Naive thymus-derived CD4-positive, alpha-beta T cell (primary cell): ENCODE measurements at regions of chr15 and their contacts with region 1.

Region 1: GRCh38 chr15:50686468-50687301 is at the start of gene TRPM7:
- DNase-seq: peak; percentile 83 to 93 (median 90)
- ATAC-seq: peak; percentile 91
- H3K4me3 ChIP-seq: peak within 1 kb of the TSS; percentile 99
- H3K4me3 Mint-ChIP-seq: peak within 1 kb of the TSS; percentile 86 to 100 (median 97)
- H3K27ac ChIP-seq: peak within 1 kb of the TSS; percentile 93
- H3K27ac Mint-ChIP-seq: peak within 1 kb of the TSS; percentile 91 to 99 (median 97)
- H3K4me1 ChIP-seq: peaks cover 16 to 26% of the 10 kb centered on the region in 2 donors
- H3K4me1 Mint-ChIP-seq: peaks cover 42 to 62% (median 51%) of the 10 kb centered on the region in 7 donors
- H3K27me3 ChIP-seq: no peaks in the 10 kb centered on the region
- H3K27me3 Mint-ChIP-seq: no peaks in the 10 kb centered on the region
- total RNA-seq, gene TRPM7: 36.1 to 62.3 (median 45.2) TPM

Region 2: GRCh38 chr15:48810414-48811317 is 1876.0 kb before region 1 on chr15 and contains the start of gene CEP152:
- CTCF ChIA-PET with region 1: no interaction called
- POLR2A ChIA-PET with region 1: no interaction called
- intact Hi-C with region 1: loop called in 1 of 2 experiments (anchors 5 kb)
- DNase-seq: peak; percentile 91 to 99 (median 98)
- ATAC-seq: peak; percentile 98
- H3K4me3 ChIP-seq: peak within 1 kb of the TSS; percentile 78
- H3K4me3 Mint-ChIP-seq: peak within 1 kb of the TSS; percentile 82 to 96 (median 89)
- H3K27ac ChIP-seq: peak within 1 kb of the TSS; percentile 76
- H3K27ac Mint-ChIP-seq: peak within 1 kb of the TSS; percentile 14 to 96 (median 87)
- H3K4me1 ChIP-seq: peaks cover 9 to 13% of the 10 kb centered on the region in 2 donors
- H3K4me1 Mint-ChIP-seq: peaks cover 12 to 38% (median 33%) of the 10 kb centered on the region in 7 donors
- H3K27me3 ChIP-seq: no peaks in the 10 kb centered on the region
- H3K27me3 Mint-ChIP-seq: peaks cover 0 to 24% (median 0%) of the 10 kb centered on the region in 5 donors
- total RNA-seq, gene CEP152: 6.2 to 26.3 (median 17.0) TPM

Region 3: GRCh38 chr15:49155110-49155833 is 1531.4 kb before region 1 on chr15 and contains the start of gene COPS2:
- CTCF ChIA-PET with region 1: no interaction called
- POLR2A ChIA-PET with region 1: no interaction called
- intact Hi-C with region 1: loop called in 1 of 2 experiments (anchors 10 kb)
- DNase-seq: peak; percentile 69 to 96 (median 94)
- ATAC-seq: peak; percentile 99
- H3K4me3 ChIP-seq: peak within 1 kb of the TSS; percentile 88
- H3K4me3 Mint-ChIP-seq: peak within 1 kb of the TSS; percentile 95 to 100 (median 98)
- H3K27ac ChIP-seq: peak within 1 kb of the TSS; percentile 93
- H3K27ac Mint-ChIP-seq: peak within 1 kb of the TSS; percentile 93 to 100 (median 97)
- H3K4me1 ChIP-seq: peaks cover 9 to 25% of the 10 kb centered on the region in 2 donors
- H3K4me1 Mint-ChIP-seq: peaks cover 40 to 72% (median 59%) of the 10 kb centered on the region in 7 donors
- H3K27me3 ChIP-seq: no peaks in the 10 kb centered on the region
- H3K27me3 Mint-ChIP-seq: no peaks in the 10 kb centered on the region
- total RNA-seq, gene COPS2: 51.0 to 91.5 (median 63.6) TPM

Region 4: GRCh38 chr15:49718234-49718633 is 968.5 kb before region 1 on chr15:
- CTCF ChIA-PET with region 1: no interaction called
- POLR2A ChIA-PET with region 1: no interaction called
- intact Hi-C with region 1: no loop called
- DNase-seq: no peak
- ATAC-seq: no peak
- H3K4me3 ChIP-seq: no peak overlapping the region
- H3K4me3 Mint-ChIP-seq: no peak overlapping the region
- H3K27ac ChIP-seq: no peak overlapping the region
- H3K27ac Mint-ChIP-seq: no peak overlapping the region
- H3K4me1 ChIP-seq: no peaks in the 10 kb centered on the region
- H3K4me1 Mint-ChIP-seq: peaks cover 0 to 5% (median 0%) of the 10 kb centered on the region in 7 donors
- H3K27me3 ChIP-seq: no peaks in the 10 kb centered on the region
- H3K27me3 Mint-ChIP-seq: peaks cover 3 to 19% (median 5%) of the 10 kb centered on the region in 5 donors

Region 5: DNA sequence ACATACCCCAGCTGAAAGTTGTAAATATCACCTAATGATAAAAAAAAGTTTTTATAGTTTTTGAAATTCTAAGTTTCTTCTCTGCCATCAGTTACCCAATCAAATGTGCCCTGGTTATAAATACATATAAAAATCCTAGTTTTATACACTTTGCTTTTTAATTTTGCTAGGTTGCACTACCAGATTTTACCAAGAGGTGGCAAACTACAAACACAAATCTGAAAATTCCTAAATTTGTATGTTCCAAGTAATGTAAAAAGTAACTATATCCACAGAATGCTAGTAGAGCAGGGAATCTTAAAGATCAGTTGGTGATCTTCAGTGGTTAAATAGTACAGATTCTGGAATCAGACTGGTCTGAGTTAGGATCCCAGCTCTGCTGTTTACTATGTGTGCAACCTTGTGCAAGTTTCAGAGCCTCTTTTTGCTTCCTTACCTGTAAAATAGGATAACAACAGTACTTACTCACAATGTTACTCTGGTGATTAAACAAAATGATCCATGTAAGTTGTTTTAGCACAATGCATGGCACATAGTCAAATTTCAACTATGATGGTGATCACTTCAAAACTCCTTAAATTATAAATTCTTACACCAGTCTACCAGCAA is 11.0 kb before region 1 on chr15:
- CTCF ChIA-PET with region 1: interaction called, 3 read pairs
- POLR2A ChIA-PET with region 1: interaction called, 5 read pairs
- intact Hi-C with region 1: loop called in 1 of 2 experiments (anchors 1 kb)
- DNase-seq: peak in 5 of 9 donors; percentile 12 to 30 (median 24)
- ATAC-seq: peak; percentile 31
- H3K4me3 ChIP-seq: no peak overlapping the region
- H3K4me3 Mint-ChIP-seq: no peak overlapping the region
- H3K27ac ChIP-seq: no peak overlapping the region
- H3K27ac Mint-ChIP-seq: peak overlapping the region in 5 of 9 donors; percentile 23 to 61 (median 45)
- H3K4me1 ChIP-seq: peaks cover 0 to 3% of the 10 kb centered on the region in 2 donors
- H3K4me1 Mint-ChIP-seq: peaks cover 9 to 45% (median 27%) of the 10 kb centered on the region in 7 donors
- H3K27me3 ChIP-seq: no peaks in the 10 kb centered on the region
- H3K27me3 Mint-ChIP-seq: no peaks in the 10 kb centered on the region

Region 6: GRCh38 chr15:50707878-50708427 is 21.3 kb after region 1 on chr15:
- CTCF ChIA-PET with region 1: no interaction called
- POLR2A ChIA-PET with region 1: no interaction called
- intact Hi-C with region 1: loop called in 1 of 2 experiments (anchors 2 kb)
- DNase-seq: no peak
- ATAC-seq: no peak
- H3K4me3 ChIP-seq: no peak overlapping the region
- H3K4me3 Mint-ChIP-seq: no peak overlapping the region
- H3K27ac ChIP-seq: no peak overlapping the region
- H3K27ac Mint-ChIP-seq: no peak overlapping the region
- H3K4me1 ChIP-seq: no peaks in the 10 kb centered on the region
- H3K4me1 Mint-ChIP-seq: peaks cover 0 to 1% (median 0%) of the 10 kb centered on the region in 7 donors
- H3K27me3 ChIP-seq: no peaks in the 10 kb centered on the region
- H3K27me3 Mint-ChIP-seq: no peaks in the 10 kb centered on the region